Caco-2 (cell line): ENCODE measurements at regions of chr5 and their contacts with region 1.

Region 1: GRCh38 chr5:117486869-117487472 is 912.3 kb upstream of the SEMA6A start:
- DNase-seq: peak; percentile 71 to 80
- H3K4me3 ChIP-seq: no peak overlapping the region
- H3K4me3 Mint-ChIP-seq: no peak overlapping the region
- H3K27ac Mint-ChIP-seq: peak overlapping the region; percentile 40
- H3K4me1 ChIP-seq: peaks cover 28% of the 10 kb centered on the region
- H3K4me1 Mint-ChIP-seq: peaks cover 31% of the 10 kb centered on the region
- H3K27me3 ChIP-seq: no peaks in the 10 kb centered on the region
- H3K27me3 Mint-ChIP-seq: no peaks in the 10 kb centered on the region
- CTCF ChIP-seq: no peak

Region 2: DNA sequence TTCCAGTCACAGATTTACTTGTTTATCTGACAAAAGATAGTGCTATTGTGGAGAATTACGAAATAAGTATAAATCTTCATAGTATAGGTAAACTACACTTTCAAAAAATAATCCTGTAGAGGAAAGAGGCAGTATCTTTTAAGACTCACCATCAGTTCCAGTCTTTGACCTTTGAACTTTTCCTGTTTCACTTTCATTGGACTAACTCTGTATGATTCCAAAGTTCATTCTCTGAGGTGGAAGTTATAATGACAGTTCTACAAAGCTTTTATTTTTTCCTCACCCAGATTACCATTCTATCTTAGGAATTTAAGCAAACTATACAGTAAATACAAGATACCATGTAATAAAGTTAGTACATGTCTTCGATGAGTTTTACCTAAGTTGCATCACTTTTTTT is 11.1 kb before region 1 on chr5:
- CTCF ChIA-PET with region 1: interaction called, 3 read pairs
- POLR2A ChIA-PET with region 1: no interaction called
- intact Hi-C with region 1: loop called (anchors 1 kb)
- DNase-seq: peak in 1 of 2 experiments; percentile 10
- H3K4me3 ChIP-seq: no peak overlapping the region
- H3K4me3 Mint-ChIP-seq: no peak overlapping the region
- H3K27ac Mint-ChIP-seq: no peak overlapping the region
- H3K4me1 ChIP-seq: peaks cover 14% of the 10 kb centered on the region
- H3K4me1 Mint-ChIP-seq: no peaks in the 10 kb centered on the region
- H3K27me3 ChIP-seq: no peaks in the 10 kb centered on the region
- H3K27me3 Mint-ChIP-seq: no peaks in the 10 kb centered on the region
- CTCF ChIP-seq: no peak

Region 3: GRCh38 chr5:117954331-117954730 is 467.4 kb after region 1 on chr5:
- CTCF ChIA-PET with region 1: no interaction called
- POLR2A ChIA-PET with region 1: no interaction called
- intact Hi-C with region 1: no loop called
- DNase-seq: no peak
- H3K4me3 ChIP-seq: no peak overlapping the region
- H3K4me3 Mint-ChIP-seq: no peak overlapping the region
- H3K27ac Mint-ChIP-seq: no peak overlapping the region
- H3K4me1 ChIP-seq: no peaks in the 10 kb centered on the region
- H3K4me1 Mint-ChIP-seq: no peaks in the 10 kb centered on the region
- H3K27me3 ChIP-seq: no peaks in the 10 kb centered on the region
- H3K27me3 Mint-ChIP-seq: peaks cover 7% of the 10 kb centered on the region
- CTCF ChIP-seq: no peak